ENCODE measurements at regions of chr12 and their contacts with region 1.

Region 1: GRCh38 chr12:98002712-98003493 is 512.5 kb upstream of the TMPO start:
- DNase-seq: peak; percentile 1
- ATAC-seq: no peak
- H3K4me3 ChIP-seq: no peak overlapping the region
- H3K27ac ChIP-seq: no peak overlapping the region
- H3K4me1 ChIP-seq: no peaks in the 10 kb centered on the region
- H3K27me3 ChIP-seq: no peaks in the 10 kb centered on the region
- CTCF ChIP-seq: peak; percentile 28; the same call in 1 of the 2 replicates
- POLR2A ChIP-seq: no peak
- RAD21 ChIP-seq: no peak

Region 2: GRCh38 chr12:97968641-97969197 is 34.2 kb before region 1 on chr12:
- CTCF ChIA-PET with region 1: no interaction called
- POLR2A ChIA-PET with region 1: interaction called, 13 read pairs
- dilution Hi-C with region 1: no loop called
- in situ Hi-C with region 1: no loop called
- intact Hi-C with region 1: no loop called
- DNase-seq: no peak
- ATAC-seq: no peak
- H3K4me3 ChIP-seq: no peak overlapping the region
- H3K27ac ChIP-seq: no peak overlapping the region
- H3K4me1 ChIP-seq: no peaks in the 10 kb centered on the region
- H3K27me3 ChIP-seq: no peaks in the 10 kb centered on the region
- CTCF ChIP-seq: no peak
- POLR2A ChIP-seq: no peak
- RAD21 ChIP-seq: no peak

Measured in IMR-90 (cell line).